Calu3 (cell line): ENCODE measurements at regions of chr1 and their contacts with region 1.

Region 1: DNA sequence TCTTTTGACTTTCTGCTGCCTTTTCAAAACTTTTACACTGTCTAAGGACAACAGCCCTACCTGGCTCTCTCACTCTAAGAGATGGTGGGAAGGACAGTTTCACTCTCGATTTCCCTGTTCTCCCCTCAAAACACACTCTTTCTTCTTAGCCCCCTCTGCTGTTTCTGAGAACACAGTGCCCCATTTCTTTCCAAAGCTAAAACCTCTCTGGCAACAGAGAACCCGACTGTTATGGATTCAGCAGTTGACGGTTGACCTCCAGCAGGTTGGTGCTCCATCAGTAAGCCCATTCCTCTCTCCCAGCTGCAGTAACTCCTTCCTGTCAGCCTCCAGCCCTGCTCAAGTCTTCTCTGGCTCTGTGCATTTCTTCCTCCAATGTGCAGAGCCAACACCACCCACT is 88.2 kb upstream of the ABCD3 start:
- DNase-seq: peak; percentile 32
- H3K4me3 Mint-ChIP-seq: peak overlapping the region; percentile 1
- H3K27ac Mint-ChIP-seq: no peak overlapping the region
- H3K4me1 Mint-ChIP-seq: peaks cover 65% of the 10 kb centered on the region
- H3K27me3 Mint-ChIP-seq: no peaks in the 10 kb centered on the region
- CTCF ChIP-seq: no peak

Region 2: DNA sequence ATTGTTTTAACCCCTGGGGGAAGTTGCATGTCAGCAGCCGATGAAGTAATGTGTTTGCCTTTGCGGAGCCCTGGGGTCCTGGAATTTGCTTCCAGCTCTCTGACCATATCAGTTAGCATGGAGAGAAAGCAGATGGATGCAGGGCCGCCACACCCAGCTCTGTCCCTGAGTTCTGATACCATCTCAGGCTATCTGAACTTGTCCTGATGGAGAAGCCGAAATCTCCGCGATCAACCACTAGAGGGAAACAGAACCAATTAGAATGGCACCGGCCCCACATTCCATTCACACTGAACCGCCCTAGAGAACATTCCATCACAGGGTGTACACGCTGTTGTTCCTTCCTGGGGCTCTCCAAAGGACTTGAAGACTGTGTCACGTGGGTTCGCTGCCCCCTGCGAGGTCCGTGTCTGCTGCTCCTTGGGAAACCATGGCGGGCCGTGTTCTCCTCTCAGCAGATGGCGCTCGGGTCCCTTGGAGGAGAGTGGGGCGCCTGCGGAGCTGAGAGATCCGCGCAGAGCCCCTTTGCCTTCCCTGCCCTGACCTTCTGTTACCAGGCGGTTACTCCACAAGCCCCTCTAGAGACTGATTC is 284.4 kb before region 1 on chr1:
- CTCF ChIA-PET with region 1: interaction called, 34 read pairs
- intact Hi-C with region 1: loop called (anchors 1 kb)
- DNase-seq: peak; percentile 89
- H3K4me3 Mint-ChIP-seq: peak overlapping the region; percentile 47
- H3K27ac Mint-ChIP-seq: peak overlapping the region; percentile 83
- H3K4me1 Mint-ChIP-seq: peaks cover 15% of the 10 kb centered on the region
- H3K27me3 Mint-ChIP-seq: no peaks in the 10 kb centered on the region
- CTCF ChIP-seq: no peak

Region 3: DNA sequence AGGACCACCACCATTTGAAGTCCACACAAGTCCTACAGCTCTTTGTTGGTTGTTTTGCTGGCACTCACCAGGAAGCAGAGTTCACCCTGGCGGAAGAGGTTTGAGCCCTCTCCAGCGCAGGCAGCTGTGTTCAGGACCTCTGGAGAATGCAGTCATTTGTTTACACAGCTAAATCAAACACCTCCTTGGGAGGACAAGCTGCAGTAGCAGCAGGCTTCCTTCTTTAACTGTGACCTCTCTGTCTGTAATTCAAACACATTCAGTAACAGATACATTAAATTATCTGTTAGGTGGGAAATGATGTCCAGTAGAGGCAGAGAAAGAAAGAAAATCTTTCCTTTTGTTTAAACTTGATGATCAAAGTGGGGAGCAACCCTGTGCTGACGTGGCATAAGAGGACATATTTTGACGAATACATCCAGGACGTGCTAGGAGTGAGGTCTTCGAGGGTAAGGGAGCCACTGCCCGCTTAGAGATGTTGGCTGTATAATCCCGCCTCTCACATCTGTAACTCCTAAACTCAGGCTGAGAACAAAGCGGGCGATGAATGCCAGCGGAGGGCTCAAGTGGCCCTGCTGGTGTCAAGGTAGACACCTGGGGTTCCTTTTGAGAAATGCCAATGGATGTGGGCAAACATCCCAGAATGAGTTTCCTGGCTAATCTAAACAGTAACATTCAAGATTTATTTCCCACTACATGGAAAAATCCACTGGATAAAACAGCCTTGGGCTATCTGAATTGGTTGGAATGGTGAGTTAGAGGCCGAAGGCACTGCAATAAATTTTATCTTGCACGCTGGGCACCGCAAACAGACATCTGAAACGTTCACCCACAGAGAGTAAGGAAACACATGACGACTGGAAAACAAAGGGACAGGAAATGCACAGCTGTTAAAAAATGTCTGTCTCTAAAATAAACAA is 260.7 kb before region 1 on chr1:
- CTCF ChIA-PET with region 1: interaction called, 107 read pairs
- intact Hi-C with region 1: loop called (anchors 2 kb)
- DNase-seq: peak; percentile 71
- H3K4me3 Mint-ChIP-seq: peak overlapping the region; percentile 11
- H3K27ac Mint-ChIP-seq: peak overlapping the region; percentile 90
- H3K4me1 Mint-ChIP-seq: peaks cover 37% of the 10 kb centered on the region
- H3K27me3 Mint-ChIP-seq: no peaks in the 10 kb centered on the region
- CTCF ChIP-seq: no peak

Region 4: DNA sequence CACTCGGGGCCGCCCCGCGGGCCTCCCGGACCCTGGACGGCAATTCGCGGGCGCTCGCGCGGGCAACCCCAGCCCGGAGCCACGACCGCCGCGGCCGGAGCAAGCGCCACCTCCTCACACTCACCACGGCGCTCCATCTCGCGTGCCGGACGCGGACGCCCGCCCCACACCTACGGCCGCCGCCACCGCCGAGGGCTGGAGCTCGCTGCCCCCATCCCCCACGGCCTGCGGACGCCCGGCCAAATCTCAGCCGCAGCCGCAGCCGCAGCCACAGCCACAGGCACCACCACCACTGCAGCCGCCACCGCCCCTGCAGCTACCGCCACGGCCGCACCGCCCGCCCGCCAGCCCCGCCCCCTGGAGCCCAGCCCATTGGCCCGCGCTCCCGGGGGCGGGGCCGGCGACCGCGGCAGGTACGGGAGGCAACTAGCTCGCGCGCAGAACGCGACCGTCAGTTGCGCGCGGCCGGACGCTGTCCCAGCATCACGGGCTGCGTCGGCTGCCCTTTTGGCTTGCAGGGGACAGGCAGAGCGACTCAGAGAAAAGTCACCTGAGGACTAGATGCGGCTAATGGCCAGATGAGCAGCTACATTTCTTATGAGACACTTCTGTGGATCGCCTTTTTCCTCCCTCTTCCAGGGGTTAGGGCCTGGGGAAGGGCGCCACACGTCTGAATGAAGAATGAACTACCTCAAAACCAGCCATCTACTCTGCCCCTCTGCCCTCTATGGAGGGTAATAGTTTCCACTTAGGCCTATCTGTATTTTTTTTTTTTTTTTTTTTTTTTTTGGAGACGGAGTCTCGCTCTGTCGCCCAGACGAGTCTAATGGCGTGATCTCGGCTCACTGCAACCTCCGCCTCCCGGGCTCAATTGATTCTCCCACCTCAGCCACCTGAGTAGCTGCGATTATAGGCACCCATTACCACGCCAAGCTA is 92.4 kb before region 1 on chr1 and contains the start of gene ARHGAP29:
- CTCF ChIA-PET with region 1: interaction called, 17 read pairs
- intact Hi-C with region 1: loop called (anchors 1 kb)
- DNase-seq: peak; percentile 95
- H3K4me3 Mint-ChIP-seq: peak within 1 kb of the TSS; percentile 83
- H3K27ac Mint-ChIP-seq: peak within 1 kb of the TSS; percentile 77
- H3K4me1 Mint-ChIP-seq: peaks cover 41% of the 10 kb centered on the region
- H3K27me3 Mint-ChIP-seq: no peaks in the 10 kb centered on the region
- CTCF ChIP-seq: no peak
- total RNA-seq, gene ARHGAP29: 57.9 and 62.6 TPM in 2 replicates

Region 5: GRCh38 chr1:94247138-94248094 is 82.6 kb before region 1 on chr1:
- CTCF ChIA-PET with region 1: interaction called, 3 read pairs
- intact Hi-C with region 1: loop called (anchors 2 kb)
- DNase-seq: peak; percentile 95
- H3K4me3 Mint-ChIP-seq: peak overlapping the region; percentile 88
- H3K27ac Mint-ChIP-seq: peak overlapping the region; percentile 78
- H3K4me1 Mint-ChIP-seq: peaks cover 44% of the 10 kb centered on the region
- H3K27me3 Mint-ChIP-seq: no peaks in the 10 kb centered on the region
- CTCF ChIP-seq: no peak

Region 6: DNA sequence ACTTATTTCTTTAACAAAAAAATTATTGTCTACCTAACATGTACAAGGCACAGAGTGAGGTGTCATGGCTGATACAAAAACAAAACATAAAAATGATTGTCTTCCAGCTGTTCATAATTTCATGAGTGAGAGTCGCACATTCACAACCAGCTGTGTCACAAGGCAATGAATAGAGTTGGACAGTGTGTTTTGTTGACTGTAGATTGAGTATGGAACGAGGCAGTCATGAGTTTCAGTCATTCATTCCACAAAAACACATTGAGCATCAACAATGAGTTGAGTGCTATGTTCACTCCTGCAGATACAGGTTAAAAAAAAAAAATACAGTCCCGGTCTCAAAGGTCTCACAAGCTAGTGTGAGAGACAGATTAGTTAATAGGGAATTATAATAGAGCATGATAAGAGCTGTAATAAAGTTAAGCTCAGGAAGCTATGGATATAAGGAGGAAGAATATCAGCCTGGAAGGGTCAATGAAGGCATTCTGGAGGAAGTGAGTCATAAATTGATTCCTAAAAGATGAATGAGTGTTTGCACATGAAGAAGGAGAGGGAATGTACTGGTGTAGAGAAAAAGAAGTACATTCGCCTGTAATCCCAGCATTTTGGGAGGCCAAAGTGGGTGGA is 44.8 kb before region 1 on chr1:
- CTCF ChIA-PET with region 1: no interaction called
- intact Hi-C with region 1: loop called (anchors 5 kb)
- DNase-seq: no peak
- H3K4me3 Mint-ChIP-seq: peak overlapping the region; percentile 2
- H3K27ac Mint-ChIP-seq: peak overlapping the region; percentile 42
- H3K4me1 Mint-ChIP-seq: peaks cover 43% of the 10 kb centered on the region
- H3K27me3 Mint-ChIP-seq: no peaks in the 10 kb centered on the region
- CTCF ChIP-seq: no peak

Region 7: GRCh38 chr1:94299627-94300552 is 30.1 kb before region 1 on chr1:
- CTCF ChIA-PET with region 1: no interaction called
- intact Hi-C with region 1: loop called (anchors 2 kb)
- DNase-seq: peak; percentile 75
- H3K4me3 Mint-ChIP-seq: peak overlapping the region; percentile 44
- H3K27ac Mint-ChIP-seq: peak overlapping the region; percentile 82
- H3K4me1 Mint-ChIP-seq: peaks cover 30% of the 10 kb centered on the region
- H3K27me3 Mint-ChIP-seq: no peaks in the 10 kb centered on the region
- CTCF ChIP-seq: no peak